ENCODE measurements at regions of chr6 and their contacts with region 1.

Region 1: GRCh38 chr6:8157839-8158238 is 55.5 kb upstream of the EEF1E1 start:
- DNase-seq: no peak
- ATAC-seq: no peak
- H3K4me3 ChIP-seq: no peak overlapping the region
- H3K4me3 Mint-ChIP-seq: no peak overlapping the region
- H3K27ac ChIP-seq: no peak overlapping the region
- H3K27ac Mint-ChIP-seq: no peak overlapping the region
- H3K4me1 ChIP-seq: no peaks in the 10 kb centered on the region
- H3K4me1 Mint-ChIP-seq: no peaks in the 10 kb centered on the region
- H3K27me3 ChIP-seq: no peaks in the 10 kb centered on the region
- H3K27me3 Mint-ChIP-seq: peaks cover 10 to 32% (median 14%) of the 10 kb centered on the region in 5 donors

Region 2: GRCh38 chr6:8187209-8187608 is 29.4 kb after region 1 on chr6:
- CTCF ChIA-PET with region 1: no interaction called
- POLR2A ChIA-PET with region 1: no interaction called
- intact Hi-C with region 1: loop called in 1 of 2 experiments (anchors 2 kb)
- DNase-seq: no peak
- ATAC-seq: no peak
- H3K4me3 ChIP-seq: no peak overlapping the region
- H3K4me3 Mint-ChIP-seq: no peak overlapping the region
- H3K27ac ChIP-seq: no peak overlapping the region
- H3K27ac Mint-ChIP-seq: no peak overlapping the region
- H3K4me1 ChIP-seq: no peaks in the 10 kb centered on the region
- H3K4me1 Mint-ChIP-seq: peaks cover 0 to under 1% (median 0%) of the 10 kb centered on the region in 7 donors
- H3K27me3 ChIP-seq: no peaks in the 10 kb centered on the region
- H3K27me3 Mint-ChIP-seq: peaks cover 5 to 52% (median 28%) of the 10 kb centered on the region in 5 donors

Region 3: GRCh38 chr6:8215631-8216030 is 57.8 kb after region 1 on chr6:
- CTCF ChIA-PET with region 1: no interaction called
- POLR2A ChIA-PET with region 1: no interaction called
- intact Hi-C with region 1: no loop called
- DNase-seq: no peak
- ATAC-seq: no peak
- H3K4me3 ChIP-seq: no peak overlapping the region
- H3K4me3 Mint-ChIP-seq: no peak overlapping the region
- H3K27ac ChIP-seq: no peak overlapping the region
- H3K27ac Mint-ChIP-seq: no peak overlapping the region
- H3K4me1 ChIP-seq: no peaks in the 10 kb centered on the region
- H3K4me1 Mint-ChIP-seq: no peaks in the 10 kb centered on the region
- H3K27me3 ChIP-seq: no peaks in the 10 kb centered on the region
- H3K27me3 Mint-ChIP-seq: peaks cover 2 to 22% (median 19%) of the 10 kb centered on the region in 5 donors

Region 4: DNA sequence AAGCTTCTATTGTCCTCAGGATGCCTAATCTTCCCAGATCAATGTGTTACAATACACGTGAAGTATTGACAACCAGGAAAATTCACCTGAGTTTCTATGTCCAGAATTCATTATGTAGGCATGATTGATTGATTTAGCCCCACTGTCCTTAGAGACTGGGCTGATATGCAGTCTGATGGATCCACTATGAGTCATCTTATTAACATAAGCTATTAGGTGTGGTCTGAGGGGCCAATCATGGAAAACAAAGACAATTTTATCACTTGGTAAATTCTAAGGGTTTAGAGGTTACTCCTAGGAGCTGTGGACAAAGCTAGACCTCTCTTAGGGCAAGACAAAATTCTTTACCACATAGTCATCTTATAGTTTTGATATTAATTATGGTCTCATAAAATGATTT is 318.8 kb after region 1 on chr6:
- CTCF ChIA-PET with region 1: no interaction called
- POLR2A ChIA-PET with region 1: no interaction called
- intact Hi-C with region 1: no loop called
- DNase-seq: no peak
- ATAC-seq: no peak
- H3K4me3 ChIP-seq: no peak overlapping the region
- H3K4me3 Mint-ChIP-seq: no peak overlapping the region
- H3K27ac ChIP-seq: no peak overlapping the region
- H3K27ac Mint-ChIP-seq: no peak overlapping the region
- H3K4me1 ChIP-seq: no peaks in the 10 kb centered on the region
- H3K4me1 Mint-ChIP-seq: no peaks in the 10 kb centered on the region
- H3K27me3 ChIP-seq: no peaks in the 10 kb centered on the region
- H3K27me3 Mint-ChIP-seq: peaks cover 0 to 8% (median 0%) of the 10 kb centered on the region in 5 donors